ENCODE measurements at regions of chr12 and their contacts with region 1.

Region 1: DNA sequence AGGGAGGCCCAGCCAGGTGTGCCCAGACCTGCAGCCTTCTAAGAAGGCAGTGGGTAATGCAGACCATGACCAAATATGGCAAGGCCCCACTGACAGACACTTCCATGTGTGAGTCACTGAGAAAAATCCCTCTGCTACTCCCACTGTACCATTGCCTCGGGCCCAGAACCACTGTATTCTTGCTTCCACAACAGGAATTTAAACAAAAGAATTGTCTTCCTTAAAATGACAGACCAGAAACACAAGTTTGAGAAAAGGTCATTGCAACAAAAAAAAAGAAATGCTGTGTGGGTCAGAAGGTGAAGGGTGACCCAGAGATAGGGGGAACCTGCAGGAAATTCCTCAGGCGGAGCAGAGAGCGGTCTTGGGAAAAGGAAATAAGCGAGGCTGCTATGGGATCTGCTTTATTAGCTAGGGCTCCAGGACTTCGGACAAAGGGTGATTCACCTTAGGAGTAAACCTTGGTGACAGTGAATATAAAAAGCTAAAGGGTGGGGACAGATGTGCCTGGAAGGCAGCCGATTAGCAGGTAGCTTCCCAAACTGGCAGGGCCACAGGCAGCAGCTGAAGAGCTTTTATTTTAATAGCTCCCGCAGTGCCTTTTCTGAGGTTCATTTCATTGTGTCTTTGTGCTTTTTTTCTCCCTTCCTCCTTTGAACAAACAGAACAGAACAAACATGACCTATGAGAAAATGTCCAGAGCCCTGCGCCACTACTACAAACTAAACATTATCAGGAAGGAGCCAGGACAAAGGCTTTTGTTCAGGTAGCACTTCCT is 185.3 kb upstream of the BCL2L14 start:
- DNase-seq: peak; percentile 92
- H3K4me3 Mint-ChIP-seq: no peak overlapping the region
- H3K27ac Mint-ChIP-seq: peak overlapping the region; percentile 74
- H3K4me1 Mint-ChIP-seq: peaks cover 23% of the 10 kb centered on the region
- H3K27me3 Mint-ChIP-seq: no peaks in the 10 kb centered on the region
- CTCF ChIP-seq: no peak

Region 2: DNA sequence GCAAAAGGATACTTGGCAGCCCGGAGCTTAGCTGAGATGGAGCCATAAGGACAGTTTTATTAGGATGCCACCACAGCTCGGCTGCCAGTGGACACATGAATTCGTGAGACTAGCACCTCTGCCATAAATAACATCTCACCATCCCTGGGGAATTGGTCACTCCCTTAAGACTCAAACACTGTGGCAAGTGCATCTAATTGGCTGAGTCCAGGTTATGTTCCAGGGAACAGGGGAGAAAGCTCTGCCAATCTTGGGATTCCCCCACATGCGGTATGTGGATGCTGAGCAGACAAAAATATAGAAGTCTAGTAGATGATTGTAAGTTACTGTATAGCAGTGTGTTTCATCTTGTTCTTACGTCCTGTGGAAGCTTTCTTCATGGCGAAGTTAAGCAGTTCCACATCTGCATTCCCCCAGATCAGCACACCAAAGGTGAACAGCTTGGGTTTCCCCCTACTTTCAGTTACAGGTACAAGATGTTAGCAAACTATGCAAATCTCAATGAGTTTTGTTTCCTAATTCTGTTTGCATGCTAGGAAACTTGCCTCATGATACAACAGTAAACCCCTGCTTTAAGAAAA is 104.8 kb before region 1 on chr12:
- CTCF ChIA-PET with region 1: no interaction called
- POLR2A ChIA-PET with region 1: no interaction called
- intact Hi-C with region 1: loop called (anchors 10 kb)
- DNase-seq: no peak
- H3K4me3 Mint-ChIP-seq: no peak overlapping the region
- H3K27ac Mint-ChIP-seq: no peak overlapping the region
- H3K4me1 Mint-ChIP-seq: peaks cover 21% of the 10 kb centered on the region
- H3K27me3 Mint-ChIP-seq: no peaks in the 10 kb centered on the region
- CTCF ChIP-seq: no peak

Region 3: DNA sequence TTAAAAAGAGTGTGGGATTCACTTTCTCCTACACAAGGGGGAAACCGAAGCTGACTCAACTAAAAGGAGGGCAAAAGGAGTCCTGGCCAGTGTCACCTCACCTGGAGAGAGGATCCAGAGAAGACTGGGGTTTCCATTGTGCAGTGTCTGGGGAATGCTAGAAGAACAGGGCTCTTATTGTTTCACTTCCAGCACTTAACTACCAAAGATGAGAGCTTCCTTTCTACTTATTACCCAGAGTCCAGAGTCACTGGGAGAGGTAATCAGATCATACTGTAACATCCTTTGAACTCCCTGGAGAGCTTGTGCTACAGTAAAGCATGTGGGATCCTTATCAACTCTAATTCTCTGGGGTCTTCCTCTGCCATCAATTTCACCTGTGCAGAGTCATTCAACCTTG is 36.9 kb after region 1 on chr12:
- CTCF ChIA-PET with region 1: no interaction called
- POLR2A ChIA-PET with region 1: no interaction called
- intact Hi-C with region 1: no loop called
- DNase-seq: no peak
- H3K4me3 Mint-ChIP-seq: no peak overlapping the region
- H3K27ac Mint-ChIP-seq: no peak overlapping the region
- H3K4me1 Mint-ChIP-seq: no peaks in the 10 kb centered on the region
- H3K27me3 Mint-ChIP-seq: peaks cover 52% of the 10 kb centered on the region
- CTCF ChIP-seq: no peak

Region 4: GRCh38 chr12:12506496-12506890 is 621.0 kb after region 1 on chr12:
- CTCF ChIA-PET with region 1: no interaction called
- POLR2A ChIA-PET with region 1: no interaction called
- intact Hi-C with region 1: no loop called
- DNase-seq: no peak
- H3K4me3 Mint-ChIP-seq: no peak overlapping the region
- H3K27ac Mint-ChIP-seq: no peak overlapping the region
- H3K4me1 Mint-ChIP-seq: peaks cover 15% of the 10 kb centered on the region
- H3K27me3 Mint-ChIP-seq: no peaks in the 10 kb centered on the region
- CTCF ChIP-seq: no peak

Measured in MCF 10A (cell line).